Left lung (tissue), 14 donors: ENCODE measurements at regions of chr18 and their contacts with region 1.

Region 1: DNA sequence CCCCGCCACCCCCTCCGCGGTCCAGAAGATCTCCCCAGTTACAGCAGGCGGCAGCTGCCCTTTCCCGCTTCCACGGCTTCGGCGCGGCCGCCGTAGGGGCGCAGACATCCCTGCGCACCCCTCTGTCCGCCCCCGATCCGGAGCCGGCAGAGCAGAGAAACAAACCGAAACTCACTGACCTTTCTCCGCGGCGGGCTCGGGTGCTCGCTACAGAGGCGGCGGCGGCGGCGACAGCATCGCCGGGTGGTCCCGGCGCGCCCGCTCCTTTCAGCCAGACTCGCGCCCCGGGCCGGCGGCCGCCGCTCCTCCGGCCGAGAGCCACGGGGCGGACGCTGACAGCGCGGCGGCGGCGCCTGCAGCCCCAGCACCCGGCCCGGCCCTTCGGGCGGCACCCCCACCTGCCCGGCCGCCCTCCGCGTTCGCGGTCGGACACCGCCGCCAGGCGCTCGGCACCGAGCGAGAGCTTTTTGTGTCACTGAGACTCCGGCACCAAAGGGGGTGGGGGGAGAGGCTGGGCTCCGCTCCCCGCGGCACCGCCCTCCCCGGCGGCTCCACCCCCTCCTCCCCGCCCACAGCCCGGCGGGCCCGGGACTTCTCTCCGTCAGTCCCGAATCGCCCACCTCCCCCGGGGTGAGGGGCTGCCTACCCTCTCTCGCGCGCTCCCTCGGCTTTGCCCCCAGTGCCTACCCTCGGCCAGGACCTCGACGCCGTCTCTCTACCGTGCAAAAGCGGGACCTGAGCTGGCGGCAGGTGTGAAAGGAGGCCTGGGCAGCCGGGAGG is 1.4 kb upstream of the RNF152 start:
- DNase-seq: peak; percentile 77 to 90 (median 85)
- ATAC-seq: peak; percentile 98
- H3K4me3 ChIP-seq: peak overlapping the region; percentile 64 to 73
- H3K27ac ChIP-seq: peak overlapping the region; percentile 65 to 69
- H3K4me1 ChIP-seq: peaks cover 8 to 26% of the 10 kb centered on the region in 2 donors
- H3K27me3 ChIP-seq: peaks cover 0 to 69% of the 10 kb centered on the region in 2 donors
- CTCF ChIP-seq: no peak

Region 2: GRCh38 chr18:61333746-61334490 is 560.2 kb before region 1 on chr18:
- intact Hi-C with region 1: no loop called
- DNase-seq: peak in 2 of 4 donors; percentile 5 to 73
- ATAC-seq: peak; percentile 41
- H3K4me3 ChIP-seq: no peak overlapping the region
- H3K27ac ChIP-seq: no peak overlapping the region
- H3K4me1 ChIP-seq: peaks cover 7 to 15% of the 10 kb centered on the region in 2 donors
- H3K27me3 ChIP-seq: peaks cover 20 to 49% of the 10 kb centered on the region in 2 donors
- CTCF ChIP-seq: no peak

Region 3: GRCh38 chr18:61628085-61628484 is 266.1 kb before region 1 on chr18:
- intact Hi-C with region 1: loop called in 1 of 2 experiments (anchors 10 kb)
- DNase-seq: no peak
- ATAC-seq: no peak
- H3K4me3 ChIP-seq: no peak overlapping the region
- H3K27ac ChIP-seq: no peak overlapping the region
- H3K4me1 ChIP-seq: no peaks in the 10 kb centered on the region
- H3K27me3 ChIP-seq: no peaks in the 10 kb centered on the region
- CTCF ChIP-seq: no peak

Region 4: GRCh38 chr18:61743775-61744531 is 150.2 kb before region 1 on chr18:
- intact Hi-C with region 1: loop called in 1 of 2 experiments (anchors 10 kb)
- DNase-seq: no peak
- ATAC-seq: peak; percentile 25
- H3K4me3 ChIP-seq: no peak overlapping the region
- H3K27ac ChIP-seq: peak overlapping the region in 1 of 2 donors; percentile 45
- H3K4me1 ChIP-seq: peaks cover 0 to 3% of the 10 kb centered on the region in 2 donors
- H3K27me3 ChIP-seq: no peaks in the 10 kb centered on the region
- CTCF ChIP-seq: no peak